Thyroid gland (tissue), 4 donors: ENCODE measurements at regions of chr13 and their contacts with region 1.

Region 1: DNA sequence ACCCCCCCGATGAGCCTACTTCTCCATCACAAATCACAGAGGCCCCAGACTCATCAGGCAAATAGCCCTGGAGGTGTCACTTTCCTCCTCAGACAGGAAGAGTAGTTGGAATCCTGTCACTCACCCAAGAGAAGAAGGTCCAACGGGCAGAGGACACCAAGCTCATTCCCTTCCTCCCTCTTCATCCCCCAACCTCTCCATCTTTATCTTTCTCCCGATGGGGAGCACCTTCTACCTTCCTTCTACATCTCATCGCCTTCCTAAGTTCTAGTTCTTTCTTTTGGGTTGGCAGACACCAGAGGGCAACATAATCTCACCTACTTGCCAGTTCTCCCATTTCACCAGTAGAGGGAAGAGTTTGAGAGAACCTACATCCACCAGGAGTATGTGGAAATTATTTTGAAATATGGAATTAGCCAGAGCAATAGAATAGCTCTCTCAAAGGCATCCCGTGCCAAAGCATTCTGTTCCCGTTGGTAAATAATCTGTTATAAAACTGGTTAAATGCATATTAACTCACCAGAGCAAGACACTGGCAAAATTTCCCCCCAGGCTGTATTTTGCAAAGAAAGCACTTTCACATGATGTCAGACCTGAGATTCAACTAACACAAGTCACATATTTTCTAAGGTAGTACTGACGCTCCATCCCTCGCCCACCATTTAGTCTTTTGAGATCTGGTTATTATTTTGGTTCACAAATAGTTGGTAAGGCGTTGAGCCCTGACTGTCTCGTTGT is 55.0 kb downstream of the ZIC5 start:
- DNase-seq: peak in 1 of 2 donors; percentile 11
- H3K4me3 ChIP-seq: no peak overlapping the region
- H3K27ac ChIP-seq: no peak overlapping the region
- H3K4me1 ChIP-seq: no peaks in the 10 kb centered on the region
- H3K27me3 ChIP-seq: no peaks in the 10 kb centered on the region
- CTCF ChIP-seq: peak; percentile 38 to 99 (median 90)
- POLR2A ChIP-seq: no peak

Region 2: DNA sequence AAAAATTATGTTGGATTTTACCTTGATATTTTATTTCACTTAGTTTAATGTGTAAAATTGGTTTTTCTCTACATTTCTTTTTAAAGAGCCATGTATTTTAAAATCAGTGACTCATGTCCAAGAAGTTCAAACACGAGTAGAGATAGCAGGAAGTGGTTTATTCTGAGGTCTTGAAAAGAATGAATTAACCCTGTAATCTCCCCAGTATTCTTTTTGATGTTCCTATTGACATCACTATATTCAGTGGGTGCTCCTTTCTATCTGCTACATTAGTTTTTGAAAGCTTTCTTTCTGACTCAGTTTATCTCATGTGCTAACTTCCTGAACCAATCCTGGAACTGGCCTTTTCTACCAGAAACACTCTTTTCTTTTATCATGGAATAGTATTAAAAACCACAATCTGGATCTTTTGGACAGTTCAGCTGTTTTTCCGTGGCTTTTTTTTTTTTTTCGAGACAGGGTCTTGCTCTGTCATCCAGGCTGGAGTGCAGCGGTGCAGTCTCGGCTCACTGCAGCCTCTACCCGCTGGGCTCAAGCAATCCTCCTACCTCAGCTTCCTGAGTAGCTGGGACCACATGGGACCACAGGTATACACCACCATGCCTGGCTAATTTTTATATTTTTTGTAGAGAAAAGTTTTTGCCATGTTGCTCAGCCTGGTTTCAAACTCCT is 287.3 kb after region 1 on chr13:
- intact Hi-C with region 1: no loop called
- DNase-seq: peak in 1 of 2 donors; percentile 36
- H3K4me3 ChIP-seq: no peak overlapping the region
- H3K27ac ChIP-seq: no peak overlapping the region
- H3K4me1 ChIP-seq: peaks cover 5 to 6% of the 10 kb centered on the region in 2 donors
- H3K27me3 ChIP-seq: no peaks in the 10 kb centered on the region
- CTCF ChIP-seq: no peak
- POLR2A ChIP-seq: no peak

Region 3: GRCh38 chr13:100235311-100235901 is 318.9 kb after region 1 on chr13:
- intact Hi-C with region 1: loop called (anchors 5 kb)
- DNase-seq: no peak
- H3K4me3 ChIP-seq: no peak overlapping the region
- H3K27ac ChIP-seq: no peak overlapping the region
- H3K4me1 ChIP-seq: peaks cover 8% of the 10 kb centered on the region in 2 donors
- H3K27me3 ChIP-seq: no peaks in the 10 kb centered on the region
- CTCF ChIP-seq: peak in 5 of 6 experiments; percentile 39 to 93 (median 71)
- POLR2A ChIP-seq: no peak

Region 4: DNA sequence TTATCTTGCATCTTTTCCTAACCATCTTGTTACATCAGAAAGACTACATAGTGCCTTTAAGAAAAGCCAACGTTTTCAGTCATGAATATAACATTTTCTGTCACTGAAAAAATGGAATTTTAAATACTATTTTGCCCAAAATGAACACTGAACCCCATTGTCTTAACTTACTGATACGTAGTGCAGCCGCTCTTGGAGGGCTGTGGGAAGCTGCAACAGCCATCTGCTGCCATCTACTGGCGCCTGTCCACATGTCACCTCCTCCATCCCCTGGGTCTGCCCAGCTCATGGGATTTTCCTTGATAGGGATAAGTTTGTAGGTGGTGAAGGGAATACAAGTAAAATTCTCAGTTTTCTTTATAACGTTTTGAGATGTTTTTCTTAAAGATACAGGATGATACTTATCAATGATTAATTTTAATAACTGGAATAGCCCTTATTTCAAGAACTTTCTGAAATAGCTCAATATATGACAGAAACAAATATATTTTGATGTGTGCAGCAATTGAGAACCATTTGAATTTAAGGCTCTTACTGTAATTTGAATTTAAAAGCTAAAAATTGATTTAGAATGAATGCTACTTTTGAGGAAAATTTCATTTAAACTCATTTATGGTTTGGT is 598.4 kb after region 1 on chr13:
- intact Hi-C with region 1: loop called (anchors 2 kb)
- DNase-seq: peak; percentile 77 to 84
- H3K4me3 ChIP-seq: no peak overlapping the region
- H3K27ac ChIP-seq: no peak overlapping the region
- H3K4me1 ChIP-seq: no peaks in the 10 kb centered on the region
- H3K27me3 ChIP-seq: no peaks in the 10 kb centered on the region
- CTCF ChIP-seq: peak; percentile 56 to 92 (median 84)
- POLR2A ChIP-seq: no peak